ENCODE measurements at regions of chr3 and their contacts with region 1.

Region 1: GRCh38 chr3:196609343-196609775 is 30.1 kb upstream of the NRROS start:
- DNase-seq: peak; percentile 43 to 98 (median 86)
- ATAC-seq: peak; percentile 100
- H3K4me3 ChIP-seq: no peak overlapping the region
- H3K27ac ChIP-seq: peak overlapping the region in 1 of 2 donors; percentile 50
- H3K4me1 ChIP-seq: peaks cover 0 to 26% of the 10 kb centered on the region in 2 donors
- H3K27me3 ChIP-seq: peaks cover 0 to 6% of the 10 kb centered on the region in 2 donors
- CTCF ChIP-seq: peak; percentile 76 to 91

Region 2: GRCh38 chr3:196684548-196685407 is 75.4 kb after region 1 on chr3:
- intact Hi-C with region 1: loop called (anchors 5 to 10 kb)
- DNase-seq: peak in 3 of 4 donors; percentile 46 to 67 (median 47)
- ATAC-seq: peak; percentile 88
- H3K4me3 ChIP-seq: no peak overlapping the region
- H3K27ac ChIP-seq: peak overlapping the region in 1 of 2 donors; percentile 61
- H3K4me1 ChIP-seq: peaks cover 0 to 54% of the 10 kb centered on the region in 2 donors
- H3K27me3 ChIP-seq: no peaks in the 10 kb centered on the region
- CTCF ChIP-seq: peak; percentile 81 to 93

Region 3: GRCh38 chr3:196837819-196838420 is 228.6 kb after region 1 on chr3:
- intact Hi-C with region 1: no loop called
- DNase-seq: peak in 2 of 4 donors; percentile 50 to 64
- ATAC-seq: peak; percentile 97
- H3K4me3 ChIP-seq: no peak overlapping the region
- H3K27ac ChIP-seq: no peak overlapping the region
- H3K4me1 ChIP-seq: peaks cover 0 to 6% of the 10 kb centered on the region in 2 donors
- H3K27me3 ChIP-seq: no peaks in the 10 kb centered on the region
- CTCF ChIP-seq: peak; percentile 83 to 84